Right ventricle myocardium superior (tissue), 1 donor: ENCODE measurements at regions of chr14 and their contacts with region 1.

Region 1: GRCh38 chr14:101997429-101998336 is 33.3 kb downstream of the DYNC1H1 start:
- DNase-seq: no peak
- ATAC-seq: no peak

Region 2: DNA sequence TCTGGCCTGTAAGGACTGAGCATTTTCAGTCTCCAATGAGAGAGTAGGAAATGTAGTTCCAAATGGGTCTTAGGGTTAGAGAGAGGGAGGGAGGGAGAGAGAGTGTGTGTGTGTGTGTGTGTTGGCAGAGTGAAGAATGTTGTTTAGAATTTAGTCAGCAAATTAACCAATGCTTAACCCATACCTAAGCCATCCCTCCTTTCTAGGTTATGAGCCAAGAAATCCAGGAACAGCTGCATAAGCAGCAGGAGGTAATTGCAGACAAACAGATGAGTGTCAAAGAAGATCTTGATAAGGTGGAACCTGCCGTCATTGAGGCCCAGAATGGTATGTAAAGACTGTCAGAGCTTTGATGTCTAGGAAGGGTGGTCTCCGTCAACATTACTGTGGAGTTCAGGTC is 32.3 kb after region 1 on chr14:
- intact Hi-C with region 1: loop called (anchors 5 kb)
- DNase-seq: no peak
- ATAC-seq: no peak